Activated CD8-positive, alpha-beta T cell treated with anti-CD3 and anti-CD28 coated beads for 36 hours (primary cell): ENCODE measurements at regions of chr5 and their contacts with region 1.

Region 1: DNA sequence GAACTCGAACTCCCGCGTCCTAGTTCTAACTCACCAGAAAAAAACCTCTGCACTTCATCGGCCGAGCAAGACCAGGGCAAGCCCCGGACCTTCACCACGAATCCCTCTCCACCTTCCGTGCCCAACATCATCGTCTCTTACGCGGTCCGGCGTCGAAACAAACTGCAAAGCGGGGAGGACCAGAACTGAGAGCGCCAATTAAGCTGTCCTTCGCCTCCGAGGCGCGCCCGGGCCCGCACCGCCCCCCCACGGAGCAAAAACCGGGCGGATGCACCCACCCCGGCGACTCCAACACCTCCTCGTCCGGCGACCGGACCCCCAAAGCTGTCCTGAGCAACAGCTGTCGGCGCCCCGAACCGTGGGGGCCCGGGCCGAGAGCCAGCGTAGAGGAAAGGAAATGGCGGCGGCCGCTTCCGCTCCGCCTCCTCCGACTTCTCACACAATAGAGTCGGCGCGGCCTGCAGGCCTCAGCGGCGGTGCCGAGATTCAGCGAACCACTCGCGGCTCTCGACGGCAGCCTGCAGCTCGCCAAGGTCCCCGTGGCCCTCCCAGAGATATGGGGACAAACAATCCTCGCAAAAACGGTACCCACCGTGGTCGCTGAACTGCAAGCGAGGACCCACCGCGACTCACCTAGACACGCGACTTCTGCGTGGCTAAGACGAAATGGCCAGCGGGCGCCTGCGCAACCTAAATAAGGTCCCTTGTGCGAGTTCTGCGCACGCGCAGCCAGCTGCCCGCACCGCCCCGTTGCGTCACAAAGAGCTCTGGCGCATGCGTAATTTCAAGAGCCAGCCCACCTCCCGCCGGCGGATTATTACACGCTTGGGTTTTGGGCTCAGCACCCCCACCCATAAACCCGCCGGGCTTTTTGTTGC is at the start of gene HNRNPH1:
- DNase-seq: peak; percentile 99
- ATAC-seq: peak; percentile 79
- H3K4me3 Mint-ChIP-seq: peak within 1 kb of the TSS; percentile 82
- H3K27ac Mint-ChIP-seq: peak within 1 kb of the TSS; percentile 94
- H3K4me1 Mint-ChIP-seq: peaks cover 25% of the 10 kb centered on the region
- H3K27me3 Mint-ChIP-seq: no peaks in the 10 kb centered on the region
- CTCF ChIP-seq: peak; percentile 23
- total RNA-seq, gene HNRNPH1: 706 to 709 TPM

Region 2: DNA sequence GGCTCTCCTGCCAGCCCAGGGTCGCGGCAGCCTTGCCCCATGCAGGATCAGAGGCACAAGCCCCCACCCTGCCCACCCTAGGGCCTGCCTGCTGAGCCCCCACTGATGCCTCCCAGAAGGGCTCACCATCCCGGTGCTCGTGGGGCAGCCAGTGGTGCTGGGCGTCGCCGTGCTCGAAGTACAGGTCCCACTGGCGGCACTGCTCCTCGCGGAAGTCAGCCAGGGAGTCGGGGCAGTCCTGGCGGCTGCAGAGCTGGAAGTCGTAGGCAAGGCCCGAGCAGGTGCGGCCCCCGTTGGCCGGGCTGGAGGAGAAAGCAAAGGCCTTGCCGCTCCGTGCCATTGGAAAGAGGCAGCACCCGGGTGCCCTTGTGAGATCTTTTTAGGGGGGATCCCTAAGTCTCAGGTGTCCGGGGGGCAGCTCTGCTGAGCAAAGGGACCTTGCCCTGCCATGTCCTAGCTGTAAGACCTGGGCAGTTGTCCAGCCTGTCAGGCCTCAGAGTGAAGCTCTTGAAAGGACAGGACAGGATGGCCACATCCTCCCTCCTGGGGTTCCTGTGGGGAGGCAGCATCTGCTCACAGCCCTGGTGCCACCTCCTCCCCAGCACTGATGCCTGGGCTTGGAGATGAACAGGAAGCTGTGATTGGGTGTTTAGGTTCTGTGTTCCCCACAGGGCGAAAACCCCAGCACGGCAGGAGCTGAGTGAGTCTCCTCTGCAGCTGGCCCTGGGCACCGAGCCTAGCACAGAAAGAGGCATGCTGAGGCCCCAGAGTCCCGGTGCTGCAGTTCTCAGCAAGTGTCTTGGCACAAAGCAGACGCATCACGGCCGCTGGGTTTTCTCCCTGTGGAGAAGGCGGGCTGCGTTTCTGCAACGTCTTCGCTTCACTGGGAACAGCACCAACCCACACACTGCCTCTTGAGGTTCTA is 485.3 kb before region 1 on chr5:
- CTCF ChIA-PET with region 1: no interaction called
- POLR2A ChIA-PET with region 1: no interaction called
- intact Hi-C with region 1: no loop called
- DNase-seq: no peak
- ATAC-seq: no peak
- H3K4me3 Mint-ChIP-seq: no peak overlapping the region
- H3K27ac Mint-ChIP-seq: no peak overlapping the region
- H3K4me1 Mint-ChIP-seq: peaks cover 14% of the 10 kb centered on the region
- H3K27me3 Mint-ChIP-seq: no peaks in the 10 kb centered on the region
- CTCF ChIP-seq: no peak

Region 3: DNA sequence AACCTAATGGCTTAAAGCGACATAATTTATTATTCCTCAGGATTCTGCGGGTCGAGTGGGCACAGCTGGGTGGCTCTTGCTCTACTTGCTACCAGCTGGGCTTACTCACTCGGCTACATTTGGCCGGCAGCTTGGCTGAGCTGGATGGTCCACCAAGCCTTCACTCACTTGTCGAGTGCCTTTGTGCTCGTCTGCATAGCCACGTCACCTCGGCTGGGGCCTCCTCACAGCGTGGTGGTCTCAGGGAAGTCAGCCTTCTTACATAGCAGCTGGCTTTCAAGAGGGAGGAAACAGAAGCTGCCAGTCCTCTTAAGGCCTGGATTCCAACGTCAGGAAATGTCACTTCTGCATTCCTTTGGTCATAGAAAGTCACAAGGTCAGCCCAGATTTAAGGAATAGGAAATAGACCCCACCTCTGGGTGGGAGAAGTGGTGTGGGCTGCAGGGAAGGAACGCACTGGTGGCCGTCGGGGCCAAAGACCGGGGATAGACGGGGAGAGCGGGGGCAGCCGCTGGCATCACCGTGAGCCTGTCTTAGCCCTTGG is 148.0 kb before region 1 on chr5:
- CTCF ChIA-PET with region 1: no interaction called
- POLR2A ChIA-PET with region 1: no interaction called
- intact Hi-C with region 1: no loop called
- DNase-seq: no peak
- ATAC-seq: no peak
- H3K4me3 Mint-ChIP-seq: no peak overlapping the region
- H3K27ac Mint-ChIP-seq: no peak overlapping the region
- H3K4me1 Mint-ChIP-seq: no peaks in the 10 kb centered on the region
- H3K27me3 Mint-ChIP-seq: peaks cover 7% of the 10 kb centered on the region
- CTCF ChIP-seq: no peak

Region 4: DNA sequence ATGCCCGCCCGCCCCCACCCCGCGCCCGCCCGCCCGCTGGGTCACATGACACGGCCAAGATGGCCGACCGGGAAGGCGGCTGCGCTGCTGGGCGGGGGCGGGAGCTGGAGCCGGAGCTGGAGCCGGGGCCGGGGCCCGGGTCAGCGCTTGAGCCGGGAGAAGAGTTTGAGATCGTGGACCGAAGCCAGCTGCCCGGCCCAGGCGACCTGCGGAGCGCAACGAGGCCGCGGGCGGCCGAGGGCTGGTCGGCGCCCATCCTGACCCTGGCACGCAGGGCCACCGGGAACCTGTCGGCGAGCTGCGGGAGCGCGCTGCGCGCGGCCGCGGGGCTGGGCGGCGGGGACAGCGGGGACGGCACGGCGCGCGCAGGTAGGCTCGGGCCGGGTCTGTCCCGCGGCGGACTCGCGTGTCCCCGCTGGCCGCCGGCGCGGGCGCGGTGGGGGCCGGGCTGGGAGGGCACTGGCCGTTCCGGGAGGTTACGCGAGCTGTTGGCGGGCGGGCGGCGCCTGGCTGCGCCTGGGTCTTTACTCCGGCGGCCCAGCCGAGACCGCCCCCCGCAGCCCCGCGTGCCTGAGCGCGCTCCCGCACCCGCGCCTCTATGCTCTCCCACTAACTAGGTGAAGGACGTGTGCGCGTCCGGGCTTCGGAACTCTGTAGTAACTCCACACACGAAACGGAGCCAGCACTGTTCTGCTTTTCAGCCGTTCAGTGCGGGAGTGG is 72.6 kb before region 1 on chr5 and contains the start of gene RUFY1:
- CTCF ChIA-PET with region 1: interaction called, 4 read pairs
- POLR2A ChIA-PET with region 1: interaction called, 23 read pairs
- intact Hi-C with region 1: no loop called
- DNase-seq: peak; percentile 82
- ATAC-seq: peak; percentile 80
- H3K4me3 Mint-ChIP-seq: peak within 1 kb of the TSS; percentile 96
- H3K27ac Mint-ChIP-seq: peak within 1 kb of the TSS; percentile 99
- H3K4me1 Mint-ChIP-seq: peaks cover 33% of the 10 kb centered on the region
- H3K27me3 Mint-ChIP-seq: no peaks in the 10 kb centered on the region
- CTCF ChIP-seq: no peak
- total RNA-seq, gene RUFY1: 22.5 to 24.7 TPM

Region 5: DNA sequence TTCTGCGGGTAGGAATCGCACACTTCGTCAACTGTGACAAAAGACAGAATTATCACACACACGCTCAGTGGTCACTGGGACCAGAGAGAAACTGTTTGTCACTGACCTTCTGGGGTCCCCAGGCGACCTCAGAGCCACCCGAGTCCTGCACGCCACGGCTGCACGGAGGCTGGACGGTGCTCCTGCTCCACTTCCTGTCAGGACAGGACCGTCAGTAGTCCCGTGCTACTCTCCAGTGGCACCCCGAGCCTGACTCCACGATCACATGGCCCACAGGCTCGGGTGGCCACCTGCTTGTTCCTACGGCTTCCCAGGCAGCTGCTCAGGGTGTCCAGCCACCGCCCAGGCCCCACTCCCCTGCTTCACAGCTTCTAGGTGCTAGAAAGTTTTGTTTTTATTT is 217.5 kb after region 1 on chr5:
- CTCF ChIA-PET with region 1: no interaction called
- POLR2A ChIA-PET with region 1: no interaction called
- intact Hi-C with region 1: no loop called
- DNase-seq: no peak
- ATAC-seq: no peak
- H3K4me3 Mint-ChIP-seq: no peak overlapping the region
- H3K27ac Mint-ChIP-seq: peak overlapping the region; percentile 57
- H3K4me1 Mint-ChIP-seq: peaks cover 19% of the 10 kb centered on the region
- H3K27me3 Mint-ChIP-seq: no peaks in the 10 kb centered on the region
- CTCF ChIP-seq: no peak